CD8-positive, alpha-beta T cell (primary cell): ENCODE measurements at regions of chr1 and their contacts with region 1.

Region 1: GRCh38 chr1:114780344-114781226 is at the start of gene SIKE1:
- DNase-seq: peak; percentile 87 to 98 (median 94)
- ATAC-seq: peak; percentile 97
- H3K4me3 ChIP-seq: peak within 1 kb of the TSS; percentile 86 to 92
- H3K4me3 Mint-ChIP-seq: peak within 1 kb of the TSS; percentile 100
- H3K27ac ChIP-seq: peak within 1 kb of the TSS; percentile 91 to 93
- H3K27ac Mint-ChIP-seq: peak within 1 kb of the TSS; percentile 99
- H3K4me1 ChIP-seq: peaks cover 15% of the 10 kb centered on the region
- H3K4me1 Mint-ChIP-seq: peaks cover 35% of the 10 kb centered on the region
- H3K27me3 ChIP-seq: no peaks in the 10 kb centered on the region
- H3K27me3 Mint-ChIP-seq: no peaks in the 10 kb centered on the region
- CTCF ChIP-seq: no peak
- total RNA-seq, gene SIKE1: 64.4 to 66.6 TPM

Region 2: GRCh38 chr1:114339379-114339778 is 441.2 kb before region 1 on chr1:
- CTCF ChIA-PET with region 1: no interaction called
- POLR2A ChIA-PET with region 1: no interaction called
- intact Hi-C with region 1: no loop called
- DNase-seq: peak in 2 of 9 experiments; percentile 32 to 33
- ATAC-seq: peak; percentile 23
- H3K4me3 ChIP-seq: no peak overlapping the region
- H3K4me3 Mint-ChIP-seq: no peak overlapping the region
- H3K27ac ChIP-seq: no peak overlapping the region
- H3K27ac Mint-ChIP-seq: peak overlapping the region; percentile 94
- H3K4me1 ChIP-seq: peaks cover 59% of the 10 kb centered on the region
- H3K4me1 Mint-ChIP-seq: peaks cover 76% of the 10 kb centered on the region
- H3K27me3 ChIP-seq: no peaks in the 10 kb centered on the region
- H3K27me3 Mint-ChIP-seq: no peaks in the 10 kb centered on the region
- CTCF ChIP-seq: no peak

Region 3: DNA sequence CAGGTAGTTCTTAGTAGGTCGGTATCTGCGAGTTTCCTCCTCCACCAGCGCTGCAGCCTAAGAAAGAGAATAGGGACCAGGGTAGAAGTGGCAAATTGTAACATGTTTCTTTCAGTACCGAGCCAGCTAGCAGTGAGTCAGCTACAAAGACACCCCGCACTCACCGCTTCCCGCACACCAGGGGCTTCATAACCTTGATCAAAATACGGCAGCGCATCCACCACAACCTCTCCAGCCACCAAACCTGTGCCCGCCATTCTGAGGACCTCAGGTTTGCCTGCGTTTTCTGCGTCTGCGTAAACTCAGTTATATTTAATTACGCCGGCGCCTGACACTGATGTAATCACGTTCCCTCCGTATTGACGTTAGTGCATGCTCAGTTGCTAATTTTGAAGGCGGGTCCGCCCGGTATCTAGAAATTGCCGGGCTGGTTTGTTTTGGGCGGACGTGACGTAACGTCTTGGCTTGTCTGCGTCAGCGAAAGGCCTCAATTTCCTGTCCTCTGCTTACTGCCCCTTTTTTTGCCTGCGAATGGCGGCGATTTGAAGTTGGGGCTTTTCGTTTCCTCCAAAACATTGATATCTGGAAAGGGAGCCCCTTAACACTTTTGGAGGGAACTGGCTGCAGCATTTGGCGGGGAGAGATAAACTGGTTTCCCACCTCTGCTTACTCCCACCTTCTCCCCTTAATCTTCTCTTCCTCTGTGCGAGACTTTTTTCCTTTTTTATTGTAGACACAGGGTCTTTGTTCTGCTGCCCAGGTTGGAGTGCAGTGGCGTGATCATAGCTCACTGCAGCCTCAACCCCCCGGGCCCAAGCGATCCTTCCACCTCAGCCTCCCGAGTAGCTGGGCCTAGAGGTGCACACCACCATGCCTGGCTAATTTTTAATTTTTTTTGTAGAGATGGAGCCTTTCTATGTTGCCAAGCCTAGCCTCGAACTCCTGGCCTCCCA is 199.0 kb before region 1 on chr1 and contains the start of gene BCAS2:
- CTCF ChIA-PET with region 1: no interaction called
- POLR2A ChIA-PET with region 1: interaction called, 4 read pairs
- intact Hi-C with region 1: loop called (anchors 1 to 5 kb)
- DNase-seq: peak; percentile 90 to 99 (median 95)
- ATAC-seq: peak; percentile 95
- H3K4me3 ChIP-seq: peak within 1 kb of the TSS; percentile 56 to 72
- H3K4me3 Mint-ChIP-seq: peak within 1 kb of the TSS; percentile 96
- H3K27ac ChIP-seq: peak within 1 kb of the TSS; percentile 84 to 94
- H3K27ac Mint-ChIP-seq: peak within 1 kb of the TSS; percentile 99
- H3K4me1 ChIP-seq: peaks cover 22% of the 10 kb centered on the region
- H3K4me1 Mint-ChIP-seq: peaks cover 46% of the 10 kb centered on the region
- H3K27me3 ChIP-seq: no peaks in the 10 kb centered on the region
- H3K27me3 Mint-ChIP-seq: no peaks in the 10 kb centered on the region
- CTCF ChIP-seq: no peak
- total RNA-seq, gene BCAS2: 113 to 125 TPM

Region 4: GRCh38 chr1:114716304-114717170 is 64.0 kb before region 1 on chr1 and contains the start of gene NRAS:
- CTCF ChIA-PET with region 1: no interaction called
- POLR2A ChIA-PET with region 1: interaction called, 15 read pairs
- intact Hi-C with region 1: loop called (anchors 1 kb)
- DNase-seq: peak; percentile 91 to 97 (median 97)
- ATAC-seq: peak; percentile 94
- H3K4me3 ChIP-seq: peak within 1 kb of the TSS; percentile 84 to 87
- H3K4me3 Mint-ChIP-seq: peak within 1 kb of the TSS; percentile 97
- H3K27ac ChIP-seq: peak within 1 kb of the TSS; percentile 94 to 99
- H3K27ac Mint-ChIP-seq: peak within 1 kb of the TSS; percentile 100
- H3K4me1 ChIP-seq: peaks cover 16% of the 10 kb centered on the region
- H3K4me1 Mint-ChIP-seq: peaks cover 34% of the 10 kb centered on the region
- H3K27me3 ChIP-seq: no peaks in the 10 kb centered on the region
- H3K27me3 Mint-ChIP-seq: no peaks in the 10 kb centered on the region
- CTCF ChIP-seq: no peak
- total RNA-seq, gene NRAS: 46.0 to 46.4 TPM

Region 5: DNA sequence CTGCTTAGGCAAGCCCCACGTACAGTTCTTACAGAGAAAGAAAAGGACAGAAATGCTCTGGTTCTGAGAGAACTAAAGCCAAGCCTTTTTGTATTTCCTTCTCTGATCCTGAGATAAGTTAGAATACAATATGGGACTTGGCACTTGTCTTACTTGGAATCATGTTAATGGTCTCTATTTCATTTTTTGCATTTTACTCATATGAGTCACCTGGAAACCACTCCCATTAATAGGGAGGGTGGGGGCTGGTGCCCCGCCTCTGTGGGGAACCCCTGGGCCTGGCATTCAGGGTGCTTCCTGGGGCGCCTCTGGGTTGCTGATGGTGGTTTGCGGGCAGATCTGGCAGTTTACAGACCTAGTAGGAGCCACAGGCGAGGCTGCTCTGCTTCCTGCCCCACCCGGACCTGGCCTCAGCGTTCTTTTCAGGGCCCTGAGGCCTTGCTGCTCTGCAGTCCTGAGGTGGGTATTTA is 282.0 kb after region 1 on chr1:
- CTCF ChIA-PET with region 1: no interaction called
- POLR2A ChIA-PET with region 1: no interaction called
- intact Hi-C with region 1: loop called in 1 of 2 experiments (anchors 5 kb)
- DNase-seq: peak; percentile 91 to 99 (median 94)
- ATAC-seq: peak; percentile 89
- H3K4me3 ChIP-seq: peak overlapping the region in 1 of 2 experiments; percentile 17
- H3K4me3 Mint-ChIP-seq: peak overlapping the region; percentile 79
- H3K27ac ChIP-seq: peak overlapping the region; percentile 74 to 93
- H3K27ac Mint-ChIP-seq: peak overlapping the region; percentile 100
- H3K4me1 ChIP-seq: peaks cover 35% of the 10 kb centered on the region
- H3K4me1 Mint-ChIP-seq: peaks cover 43% of the 10 kb centered on the region
- H3K27me3 ChIP-seq: no peaks in the 10 kb centered on the region
- H3K27me3 Mint-ChIP-seq: no peaks in the 10 kb centered on the region
- CTCF ChIP-seq: no peak

Region 6: DNA sequence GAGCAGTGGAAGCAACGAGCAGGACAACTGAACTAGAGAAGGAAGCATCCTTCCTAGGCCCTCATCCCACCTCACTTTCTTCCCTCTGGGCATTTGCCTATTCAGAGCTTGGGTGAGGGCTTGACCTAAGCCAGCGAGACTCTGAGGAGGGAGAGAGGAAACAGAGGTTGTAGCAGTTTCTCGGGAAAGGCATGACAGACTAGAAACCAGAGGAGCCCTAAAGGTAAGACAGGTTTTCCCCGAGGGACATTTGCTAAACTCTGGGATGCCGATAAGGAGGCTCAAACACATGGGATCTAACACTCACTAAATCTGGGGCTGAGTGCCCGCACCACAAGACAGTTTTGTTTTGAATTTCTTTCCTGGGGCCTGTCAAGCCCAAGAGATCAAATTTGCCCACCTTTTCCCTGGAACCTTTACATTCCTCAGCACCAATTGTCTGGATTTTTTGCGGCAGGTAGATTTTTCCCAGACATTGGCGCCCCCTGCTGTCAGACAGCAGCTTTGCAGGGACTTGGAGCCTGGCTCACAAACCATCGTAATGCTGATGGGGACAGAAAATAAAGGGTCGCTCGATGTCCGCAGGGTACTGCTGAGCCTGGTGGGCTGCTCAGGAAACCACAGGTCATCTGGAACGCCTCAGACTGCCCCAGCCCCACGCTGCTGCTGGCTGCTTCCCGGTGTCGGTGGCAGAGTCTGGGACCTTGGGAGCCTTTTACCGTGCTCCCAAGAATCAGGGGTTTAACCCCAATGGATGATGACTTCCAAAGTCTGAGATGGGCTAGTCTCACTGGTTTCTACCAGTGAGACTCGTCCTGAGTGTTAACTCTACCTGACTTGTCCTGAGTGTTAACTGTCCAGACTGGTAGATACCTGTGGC is 332.2 kb after region 1 on chr1:
- CTCF ChIA-PET with region 1: no interaction called
- POLR2A ChIA-PET with region 1: no interaction called
- intact Hi-C with region 1: loop called in 1 of 2 experiments (anchors 5 kb)
- DNase-seq: peak; percentile 26 to 79 (median 60)
- ATAC-seq: peak; percentile 64
- H3K4me3 ChIP-seq: no peak overlapping the region
- H3K4me3 Mint-ChIP-seq: no peak overlapping the region
- H3K27ac ChIP-seq: no peak overlapping the region
- H3K27ac Mint-ChIP-seq: no peak overlapping the region
- H3K4me1 ChIP-seq: no peaks in the 10 kb centered on the region
- H3K4me1 Mint-ChIP-seq: peaks cover 15% of the 10 kb centered on the region
- H3K27me3 ChIP-seq: no peaks in the 10 kb centered on the region
- H3K27me3 Mint-ChIP-seq: peaks cover 4% of the 10 kb centered on the region
- CTCF ChIP-seq: peak; percentile 99